Head of caudate nucleus (tissue), 42 donors: ENCODE measurements at regions of chr1 and their contacts with region 1.

Region 1: GRCh38 chr1:36099681-36100341 is 11.1 kb downstream of the ADPRS start:
- DNase-seq: peak; percentile 64 to 92 (median 80)

Region 2: DNA sequence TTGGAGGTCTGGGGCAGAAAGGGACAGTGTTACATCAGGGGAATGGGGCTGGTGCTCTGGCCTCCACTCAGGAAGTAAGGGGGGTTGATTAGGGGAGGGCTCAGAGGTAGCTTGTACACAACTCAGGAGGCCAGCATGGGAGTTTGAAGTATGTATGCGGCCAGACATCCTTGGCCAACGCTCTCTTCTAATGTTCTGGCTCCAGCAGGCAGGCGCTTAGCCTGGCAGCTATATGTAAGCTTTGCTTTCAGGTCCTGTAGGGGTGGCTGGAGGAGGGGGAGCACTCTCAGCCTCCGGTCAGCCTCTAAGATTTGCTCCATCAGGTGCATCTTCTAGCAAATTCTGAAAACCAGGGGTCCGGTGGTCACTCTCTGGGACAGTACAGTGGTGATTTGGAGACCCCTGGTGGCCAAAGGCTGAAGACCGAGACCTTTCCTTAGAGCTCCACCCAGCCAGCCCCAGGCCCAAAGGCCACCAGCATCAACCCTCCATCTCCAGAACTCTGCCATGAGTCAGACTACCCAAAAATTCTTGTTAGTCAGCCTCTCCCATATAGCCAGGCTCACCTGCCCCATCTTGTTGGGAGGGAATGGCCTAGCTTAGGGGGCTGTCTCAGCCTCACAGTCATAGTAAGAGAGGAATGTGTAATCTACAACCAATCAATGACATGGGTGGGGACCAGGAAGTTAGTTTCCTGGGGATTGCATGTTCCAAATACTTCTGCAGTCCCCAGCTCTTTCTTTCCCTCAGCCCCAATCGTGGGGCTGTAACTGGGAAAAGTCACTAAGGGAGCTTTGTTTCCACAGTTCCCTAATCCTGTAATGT is 34.9 kb after region 1 on chr1:
- intact Hi-C with region 1: loop called (anchors 5 kb)
- DNase-seq: peak in 37 of 42 donors; percentile 31 to 88 (median 64)